HepG2 (cell line): ENCODE measurements at regions of chr11 and their contacts with region 1.

Region 1: DNA sequence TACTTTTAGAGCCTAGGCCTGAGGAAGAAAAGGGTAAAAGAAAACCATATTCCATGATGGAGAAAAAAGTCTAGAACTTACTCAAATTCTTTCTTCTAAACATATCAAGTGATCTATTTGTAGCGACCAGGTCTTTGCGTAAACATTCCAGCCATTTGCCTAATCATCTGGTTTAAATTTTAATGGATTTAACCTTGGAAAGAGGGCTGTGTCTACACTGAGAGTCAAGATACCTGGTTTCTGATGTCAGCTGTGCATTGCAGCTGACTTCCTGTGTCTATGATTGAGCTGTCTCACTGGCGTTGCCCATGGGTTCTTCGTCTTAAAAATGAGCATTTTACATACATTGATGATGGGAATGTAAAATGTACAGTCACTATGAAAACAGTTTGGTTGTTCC is 10.0 kb upstream of the TMEM123 start:
- DNase-seq: peak; percentile 94
- ATAC-seq: peak; percentile 92
- H3K4me3 ChIP-seq: peak overlapping the region in 2 of 3 experiments; percentile 5 to 18; a peak in 2 of 6 replicates
- H3K27ac ChIP-seq: peak overlapping the region; percentile 93
- H3K4me1 ChIP-seq: peaks cover 95% of the 10 kb centered on the region
- H3K27me3 ChIP-seq: no peaks in the 10 kb centered on the region
- CTCF ChIP-seq: no peak
- EP300 ChIP-seq: peak; percentile 72 to 91; a peak in 3 of 4 replicates
- POLR2A ChIP-seq: 0 out of 4 replicates have a peak, but pooled peaks of 1 of the 2 experiments have one; percentile 18
- RAD21 ChIP-seq: no peak

Region 2: DNA sequence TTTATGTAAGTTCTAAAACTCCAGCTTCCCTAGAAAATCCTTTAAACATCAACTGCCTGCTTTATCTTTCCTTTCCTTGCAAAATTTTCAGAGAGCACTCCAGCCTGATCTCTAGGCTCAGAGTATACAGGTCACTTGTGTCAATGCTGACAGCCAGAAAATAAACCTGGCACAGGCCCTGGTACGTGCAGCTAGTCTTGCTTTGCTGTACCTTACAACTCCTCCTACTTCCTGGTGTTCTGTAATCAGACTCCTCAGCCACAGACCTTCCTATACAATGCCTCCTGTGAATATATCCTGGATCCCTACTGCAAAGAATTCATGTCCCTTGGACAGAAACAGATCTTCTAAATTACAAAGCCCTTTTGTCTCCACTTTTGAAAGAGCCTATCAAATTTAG is 14.2 kb after region 1 on chr11:
- CTCF ChIA-PET with region 1: no interaction called
- POLR2A ChIA-PET with region 1: interaction called, 7 read pairs
- in situ Hi-C with region 1: no loop called
- intact Hi-C with region 1: loop called (anchors 2 kb)
- DNase-seq: peak; percentile 95
- ATAC-seq: peak; percentile 100
- H3K4me3 ChIP-seq: peak overlapping the region in 2 of 3 experiments; percentile 32 to 38; a peak in 1 of 6 replicates
- H3K27ac ChIP-seq: peak overlapping the region; percentile 79
- H3K4me1 ChIP-seq: peaks cover 65% of the 10 kb centered on the region
- H3K27me3 ChIP-seq: no peaks in the 10 kb centered on the region
- CTCF ChIP-seq: no peak
- EP300 ChIP-seq: peak in 1 of 2 experiments; percentile 83; a peak in 2 of 4 replicates
- POLR2A ChIP-seq: peak in 1 of 2 experiments; percentile 56; a peak in 2 of 4 replicates
- RAD21 ChIP-seq: no peak